ENCODE measurements at regions of chr19 and their contacts with region 1.

Region 1: GRCh38 chr19:39805104-39805503 is 26.4 kb downstream of the LEUTX start:
- DNase-seq: no peak
- H3K4me3 Mint-ChIP-seq: no peak overlapping the region
- H3K27ac Mint-ChIP-seq: no peak overlapping the region
- H3K4me1 Mint-ChIP-seq: no peaks in the 10 kb centered on the region
- H3K27me3 Mint-ChIP-seq: peaks cover 13% of the 10 kb centered on the region

Region 2: GRCh38 chr19:39728040-39728439 is 77.1 kb before region 1 on chr19:
- CTCF ChIA-PET with region 1: no interaction called
- POLR2A ChIA-PET with region 1: no interaction called
- DNase-seq: no peak
- H3K4me3 Mint-ChIP-seq: no peak overlapping the region
- H3K27ac Mint-ChIP-seq: no peak overlapping the region
- H3K4me1 Mint-ChIP-seq: no peaks in the 10 kb centered on the region
- H3K27me3 Mint-ChIP-seq: peaks cover 25% of the 10 kb centered on the region

Region 3: DNA sequence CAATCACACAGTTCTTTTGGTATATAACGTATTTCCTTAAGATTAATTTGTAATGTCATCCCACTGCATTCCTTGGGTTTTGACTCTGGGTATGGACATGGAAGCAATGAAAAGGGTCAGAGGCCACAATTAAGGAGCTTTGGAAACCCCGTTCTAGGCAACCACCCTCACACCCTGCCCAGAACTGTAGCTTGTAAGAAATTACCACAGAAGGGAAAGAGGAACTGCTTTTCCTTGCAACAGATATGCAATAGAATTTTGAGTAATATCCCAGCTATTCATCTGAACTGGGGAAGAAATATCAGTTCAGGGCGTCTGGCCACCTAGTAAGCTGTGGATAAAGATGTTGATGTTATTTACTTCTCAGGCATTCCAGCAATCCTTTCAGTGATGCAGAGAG is 66.3 kb before region 1 on chr19:
- CTCF ChIA-PET with region 1: no interaction called
- POLR2A ChIA-PET with region 1: no interaction called
- DNase-seq: no peak
- H3K4me3 Mint-ChIP-seq: no peak overlapping the region
- H3K27ac Mint-ChIP-seq: no peak overlapping the region
- H3K4me1 Mint-ChIP-seq: peaks cover 9% of the 10 kb centered on the region
- H3K27me3 Mint-ChIP-seq: peaks cover 12% of the 10 kb centered on the region

Region 4: DNA sequence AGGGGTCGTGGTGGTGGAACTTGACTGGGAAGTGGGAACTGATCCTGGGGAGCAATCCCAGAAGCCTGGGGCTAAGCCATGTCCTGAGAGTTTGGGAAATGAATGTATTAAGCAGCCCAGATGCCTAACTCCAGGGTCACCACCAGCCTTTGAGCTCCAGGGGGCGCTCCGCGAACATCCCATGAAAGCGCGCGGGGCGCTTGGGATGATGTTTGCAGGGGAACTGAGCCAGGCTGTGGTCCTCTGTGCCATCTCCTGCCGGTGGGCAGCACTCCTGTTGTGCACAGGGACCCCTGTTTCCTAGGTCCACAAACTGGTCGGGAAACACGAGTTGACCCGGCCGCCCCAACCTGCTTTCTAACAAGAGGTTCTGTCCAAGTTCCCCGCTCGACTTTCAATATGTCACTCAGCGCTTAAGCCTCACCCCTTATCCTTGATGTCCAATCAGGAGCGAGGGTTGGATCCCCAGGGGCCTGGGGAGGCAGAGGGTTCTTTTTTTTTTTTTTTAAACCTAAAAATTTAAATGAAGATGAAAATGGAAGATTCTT is 12.0 kb before region 1 on chr19:
- CTCF ChIA-PET with region 1: interaction called, 22 read pairs
- POLR2A ChIA-PET with region 1: no interaction called
- DNase-seq: peak; percentile 78
- H3K4me3 Mint-ChIP-seq: peak overlapping the region; percentile 73
- H3K27ac Mint-ChIP-seq: no peak overlapping the region
- H3K4me1 Mint-ChIP-seq: peaks cover 14% of the 10 kb centered on the region
- H3K27me3 Mint-ChIP-seq: peaks cover 21% of the 10 kb centered on the region

Measured in activated CD4-positive, alpha-beta T cell treated with anti-CD3 and anti-CD28 coated beads, Interleukin-2, amount 10 ng/mL, durations not matched to agents 7 days and 5 days (primary cell).